Gastrocnemius medialis (tissue), 4 donors: ENCODE measurements at regions of chr1 and their contacts with region 1.

Region 1: GRCh38 chr1:27044613-27045151 is 32.0 kb upstream of the TENT5B start:
- DNase-seq: peak; percentile 69 to 71
- ATAC-seq: peak; percentile 74 to 89
- H3K4me3 ChIP-seq: peak overlapping the region; percentile 14 to 34 (median 18)
- H3K27ac ChIP-seq: no peak overlapping the region
- H3K4me1 ChIP-seq: peaks cover 3% of the 10 kb centered on the region in 2 donors
- H3K27me3 ChIP-seq: no peaks in the 10 kb centered on the region
- CTCF ChIP-seq: peak; percentile 93 to 98 (median 94)
- POLR2A ChIP-seq: no peak

Region 2: GRCh38 chr1:26993237-26994019 is 51.3 kb before region 1 on chr1 and contains the start of gene TRNP1:
- in situ Hi-C with region 1: no loop called
- intact Hi-C with region 1: loop called (anchors 2 kb)
- DNase-seq: peak in 1 of 2 donors; percentile 31
- ATAC-seq: peak; percentile 28 to 42
- H3K4me3 ChIP-seq: peak within 1 kb of the TSS; percentile 43 to 75 (median 62)
- H3K27ac ChIP-seq: peak within 1 kb of the TSS in 3 of 4 donors; percentile 29 to 59 (median 53)
- H3K4me1 ChIP-seq: peaks cover 1 to 13% of the 10 kb centered on the region in 2 donors
- H3K27me3 ChIP-seq: peaks cover 23 to 38% (median 36%) of the 10 kb centered on the region in 3 donors
- CTCF ChIP-seq: no peak
- POLR2A ChIP-seq: peak in 1 of 2 donors; percentile 30
- total RNA-seq, gene TRNP1: 1.2 to 5.1 (median 2.0) TPM

Region 3: GRCh38 chr1:27574871-27575831 is 530.5 kb after region 1 on chr1:
- in situ Hi-C with region 1: no loop called
- intact Hi-C with region 1: no loop called
- DNase-seq: peak in 1 of 2 donors; percentile 87
- ATAC-seq: peak; percentile 41 to 47
- H3K4me3 ChIP-seq: peak overlapping the region; percentile 52 to 66 (median 58)
- H3K27ac ChIP-seq: peak overlapping the region; percentile 95 to 100 (median 98)
- H3K4me1 ChIP-seq: peaks cover 82 to 85% of the 10 kb centered on the region in 2 donors
- H3K27me3 ChIP-seq: no peaks in the 10 kb centered on the region
- CTCF ChIP-seq: peak in 2 of 5 experiments; percentile 30 to 51
- POLR2A ChIP-seq: peak; percentile 27 to 57